Posterior vena cava (tissue), 2 donors: ENCODE measurements at regions of chr17 and their contacts with region 1.

Region 1: GRCh38 chr17:6610011-6610410 is 30.5 kb downstream of the KIAA0753 start:
- DNase-seq: no peak

Region 2: GRCh38 chr17:6374761-6375312 is 235.2 kb before region 1 on chr17:
- intact Hi-C with region 1: no loop called
- DNase-seq: no peak

Region 3: DNA sequence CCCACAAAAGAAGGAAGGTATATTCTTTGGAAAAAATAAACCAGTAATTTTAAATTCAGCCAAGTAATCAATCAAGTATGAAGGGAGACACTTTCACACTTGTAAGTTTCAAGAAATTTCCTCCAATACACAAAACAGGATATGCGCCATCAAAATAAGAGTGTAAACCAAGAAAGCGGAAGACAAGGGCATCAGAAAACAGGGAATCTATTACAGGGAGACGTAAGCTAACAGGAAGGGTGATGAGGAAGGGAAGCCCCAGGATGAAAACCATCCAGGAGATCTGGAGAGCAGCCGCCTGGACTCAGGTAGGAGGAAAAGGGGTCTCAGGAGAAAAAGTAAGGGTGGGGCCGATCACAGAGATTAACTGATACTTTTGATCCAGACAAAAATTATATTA is 21.8 kb before region 1 on chr17:
- intact Hi-C with region 1: no loop called
- DNase-seq: no peak

Region 4: DNA sequence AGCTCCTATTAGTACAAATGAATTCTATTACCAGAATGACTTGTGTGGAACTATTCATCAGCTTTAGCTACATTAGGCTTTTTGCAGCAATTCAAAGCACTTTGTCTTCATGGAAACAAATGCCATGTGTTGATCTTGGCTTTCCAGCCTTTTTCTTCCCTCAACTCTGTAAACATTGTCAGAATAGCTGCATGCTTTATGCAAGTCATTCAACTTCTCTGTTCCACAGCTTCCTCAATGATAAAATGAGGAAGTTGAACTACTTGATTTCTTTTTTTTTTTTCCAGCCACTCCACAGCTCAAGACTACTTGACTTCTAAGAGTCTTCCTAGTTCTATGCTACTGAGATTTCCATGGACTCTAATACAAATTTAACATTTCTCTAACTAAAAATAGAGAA is 10.6 kb before region 1 on chr17:
- intact Hi-C with region 1: loop called in 1 of 2 experiments (anchors 1 kb)
- DNase-seq: no peak